Panc1 (cell line): ENCODE measurements at regions of chr10 and their contacts with region 1.

Region 1: DNA sequence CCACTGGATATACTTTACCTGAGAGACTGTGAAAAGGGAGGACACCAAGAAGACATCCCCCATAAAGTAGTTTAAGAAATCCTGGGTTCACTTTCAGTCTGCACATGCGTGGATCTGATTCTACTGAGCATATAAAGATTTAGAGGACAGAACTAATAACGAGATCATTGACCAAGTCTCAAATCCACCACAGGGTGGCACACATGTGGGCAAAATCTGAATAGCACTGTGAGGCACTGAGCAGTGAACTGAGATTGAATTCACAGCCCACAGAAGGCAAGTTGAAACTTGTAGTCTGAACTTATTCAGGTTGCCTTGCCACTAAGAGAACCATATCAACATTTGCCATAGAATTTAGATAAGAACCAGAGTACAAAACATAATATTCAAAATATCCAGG is 818.6 kb downstream of the GRID1 start:
- DNase-seq: peak; percentile 66
- ATAC-seq: peak; percentile 99
- H3K4me3 ChIP-seq: no peak overlapping the region
- H3K27ac ChIP-seq: peak overlapping the region; percentile 65; the same call in 1 of the 2 replicates
- H3K4me1 ChIP-seq: peaks cover 4% of the 10 kb centered on the region; the same call in 1 of the 2 replicates
- H3K27me3 ChIP-seq: no peaks in the 10 kb centered on the region
- CTCF ChIP-seq: peak; percentile 79

Region 2: GRCh38 chr10:86127274-86127819 is 579.3 kb after region 1 on chr10:
- CTCF ChIA-PET with region 1: no interaction called
- POLR2A ChIA-PET with region 1: no interaction called
- in situ Hi-C with region 1: no loop called
- intact Hi-C with region 1: loop called (anchors 10 kb)
- DNase-seq: no peak
- ATAC-seq: no peak
- H3K4me3 ChIP-seq: no peak overlapping the region
- H3K27ac ChIP-seq: no peak overlapping the region
- H3K4me1 ChIP-seq: no peaks in the 10 kb centered on the region
- H3K27me3 ChIP-seq: no peaks in the 10 kb centered on the region; the same call in 1 of the 2 replicates
- CTCF ChIP-seq: no peak